BJ (cell line): ENCODE measurements at regions of chr15 and their contacts with region 1.

Region 1: GRCh38 chr15:49235446-49236124 is 65.5 kb downstream of the GALK2 start:
- DNase-seq: peak; percentile 59
- H3K4me3 ChIP-seq: no peak overlapping the region
- H3K27me3 ChIP-seq: no peaks in the 10 kb centered on the region
- CTCF ChIP-seq: peak; percentile 70

Region 2: GRCh38 chr15:49421991-49422390 is 186.4 kb after region 1 on chr15:
- CTCF ChIA-PET with region 1: interaction called, 113 read pairs
- POLR2A ChIA-PET with region 1: interaction called, 4 read pairs
- DNase-seq: no peak
- H3K4me3 ChIP-seq: no peak overlapping the region
- H3K27me3 ChIP-seq: no peaks in the 10 kb centered on the region
- CTCF ChIP-seq: peak; percentile 59

Region 3: DNA sequence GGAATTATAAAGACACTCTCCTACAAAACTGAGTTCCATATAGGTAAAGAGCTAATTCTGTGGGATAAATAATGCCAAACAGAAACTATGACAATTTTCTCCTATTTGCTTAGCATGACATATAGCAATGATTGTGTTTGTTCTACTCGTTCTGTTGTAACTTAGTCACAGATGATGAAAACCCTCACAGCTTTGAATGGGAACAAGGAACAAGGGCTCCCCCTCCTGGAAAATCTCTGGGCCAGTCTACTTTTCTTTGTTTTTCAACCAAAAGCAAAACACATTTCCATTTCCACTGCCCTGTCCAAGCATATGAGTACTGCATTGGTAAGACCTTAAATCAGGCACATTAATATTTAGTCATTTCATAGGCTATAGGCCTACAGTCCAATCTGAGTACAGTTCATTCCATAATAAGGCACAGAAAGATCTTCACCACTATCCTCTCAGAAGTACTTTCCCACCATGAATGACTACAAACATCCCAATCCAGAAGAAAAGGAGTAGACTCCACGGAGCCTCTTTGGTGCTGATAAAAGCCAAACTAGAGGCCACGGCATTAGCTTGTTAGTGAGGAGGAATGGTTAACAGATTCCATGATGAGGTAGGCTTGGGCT is 816.3 kb after region 1 on chr15:
- CTCF ChIA-PET with region 1: interaction called, 20 read pairs
- POLR2A ChIA-PET with region 1: no interaction called
- DNase-seq: peak; percentile 28
- H3K4me3 ChIP-seq: no peak overlapping the region
- H3K27me3 ChIP-seq: no peaks in the 10 kb centered on the region
- CTCF ChIP-seq: peak; percentile 78

Region 4: DNA sequence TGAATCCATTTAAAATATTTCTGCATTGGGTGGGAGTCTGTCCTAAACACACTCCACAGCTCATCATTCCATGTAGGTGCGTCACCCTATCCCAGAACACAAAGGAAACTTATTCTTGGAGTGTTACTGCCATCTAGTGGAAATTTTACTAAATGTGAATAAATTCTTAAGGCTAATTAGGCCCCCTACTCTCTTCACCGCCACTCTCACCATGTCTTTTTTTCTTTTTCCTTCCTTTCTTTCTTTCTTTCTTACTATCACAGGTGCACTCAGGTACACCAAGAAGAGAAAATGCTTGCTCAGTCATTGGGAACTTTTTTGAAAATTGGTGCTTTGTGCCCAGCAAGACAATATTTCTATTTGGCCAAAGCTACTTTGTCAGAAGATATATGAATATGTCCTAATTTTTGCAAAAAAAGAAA is 909.9 kb after region 1 on chr15:
- CTCF ChIA-PET with region 1: interaction called, 16 read pairs
- POLR2A ChIA-PET with region 1: no interaction called
- DNase-seq: no peak
- H3K4me3 ChIP-seq: no peak overlapping the region
- H3K27me3 ChIP-seq: no peaks in the 10 kb centered on the region
- CTCF ChIP-seq: peak; percentile 32